H1 (cell line): ENCODE measurements at regions of chr14 and their contacts with region 1.

Region 1: GRCh38 chr14:100645192-100645990 is 58.2 kb upstream of the BEGAIN start:
- DNase-seq: peak; percentile 54 to 97
- H3K4me3 ChIP-seq: peak overlapping the region in 2 of 4 experiments; percentile 11 to 40; a peak in 4 of 8 replicates
- H3K27ac ChIP-seq: no peak overlapping the region
- H3K4me1 ChIP-seq: peaks cover 0 to 7% (median 6%) of the 10 kb centered on the region in 4 experiments; a peak in 5 of 7 replicates
- H3K27me3 ChIP-seq: no peaks in the 10 kb centered on the region; a peak in 1 of 7 replicates
- CTCF ChIP-seq: peak; percentile 80 to 93 (median 85)
- EP300 ChIP-seq: no peak; a peak in 1 of 3 replicates
- POLR2A ChIP-seq: no peak
- RAD21 ChIP-seq: peak; percentile 89 to 94

Region 2: GRCh38 chr14:99951085-99951484 is 694.3 kb before region 1 on chr14:
- CTCF ChIA-PET with region 1: no interaction called
- POLR2A ChIA-PET with region 1: no interaction called
- DNase-seq: no peak
- H3K4me3 ChIP-seq: no peak overlapping the region
- H3K27ac ChIP-seq: no peak overlapping the region
- H3K4me1 ChIP-seq: peaks cover 0 to 21% (median 4%) of the 10 kb centered on the region in 4 experiments; a peak in 5 of 7 replicates
- H3K27me3 ChIP-seq: peaks cover 0 to 3% (median 0%) of the 10 kb centered on the region in 4 experiments; a peak in 1 of 7 replicates
- CTCF ChIP-seq: no peak
- EP300 ChIP-seq: no peak
- POLR2A ChIP-seq: no peak
- RAD21 ChIP-seq: no peak

Region 3: GRCh38 chr14:100406505-100407131 is 238.8 kb before region 1 on chr14:
- CTCF ChIA-PET with region 1: interaction called, 20 read pairs
- POLR2A ChIA-PET with region 1: no interaction called
- DNase-seq: no peak
- H3K4me3 ChIP-seq: no peak overlapping the region
- H3K27ac ChIP-seq: no peak overlapping the region
- H3K4me1 ChIP-seq: peaks cover 7 to 19% (median 14%) of the 10 kb centered on the region in 4 experiments
- H3K27me3 ChIP-seq: no peaks in the 10 kb centered on the region
- CTCF ChIP-seq: no peak
- EP300 ChIP-seq: no peak
- POLR2A ChIP-seq: no peak
- RAD21 ChIP-seq: no peak

Region 4: DNA sequence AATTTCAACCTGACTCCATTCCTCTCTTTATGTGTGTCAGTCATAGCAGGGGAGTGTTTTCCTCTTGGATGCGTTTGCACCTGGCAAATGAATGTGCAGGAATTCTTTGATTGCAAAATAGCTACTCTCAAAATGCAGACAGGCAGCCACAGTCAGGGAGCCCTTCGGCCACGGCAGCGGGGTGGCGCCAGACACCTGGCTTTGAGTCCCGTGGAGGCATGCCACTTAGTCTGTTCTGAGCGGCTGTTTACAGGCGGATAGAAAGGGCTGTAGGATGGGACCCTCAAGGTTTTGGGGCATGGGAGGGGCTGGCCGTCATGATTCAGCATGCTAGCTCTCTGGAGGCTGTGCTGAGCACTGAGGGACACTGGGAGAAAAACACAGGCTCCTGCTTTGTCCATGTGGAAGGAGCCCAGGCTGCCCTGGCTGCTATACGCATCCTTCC is 205.2 kb before region 1 on chr14:
- CTCF ChIA-PET with region 1: interaction called, 73 read pairs
- POLR2A ChIA-PET with region 1: no interaction called
- DNase-seq: peak; percentile 31 to 75
- H3K4me3 ChIP-seq: no peak overlapping the region
- H3K27ac ChIP-seq: no peak overlapping the region
- H3K4me1 ChIP-seq: peaks cover 0 to 6% (median 4%) of the 10 kb centered on the region in 4 experiments; a peak in 4 of 7 replicates
- H3K27me3 ChIP-seq: no peaks in the 10 kb centered on the region
- CTCF ChIP-seq: peak; percentile 79 to 84 (median 79)
- EP300 ChIP-seq: no peak
- POLR2A ChIP-seq: no peak
- RAD21 ChIP-seq: peak; percentile 91 to 92

Region 5: GRCh38 chr14:100533656-100534485 is 111.5 kb before region 1 on chr14:
- CTCF ChIA-PET with region 1: interaction called, 61 read pairs
- POLR2A ChIA-PET with region 1: no interaction called
- DNase-seq: no peak
- H3K4me3 ChIP-seq: no peak overlapping the region
- H3K27ac ChIP-seq: no peak overlapping the region
- H3K4me1 ChIP-seq: peaks cover 0 to 10% (median 0%) of the 10 kb centered on the region in 4 experiments; a peak in 1 of 7 replicates
- H3K27me3 ChIP-seq: no peaks in the 10 kb centered on the region
- CTCF ChIP-seq: no peak
- EP300 ChIP-seq: no peak
- POLR2A ChIP-seq: no peak
- RAD21 ChIP-seq: no peak

Region 6: GRCh38 chr14:100568164-100568997 is 77.0 kb before region 1 on chr14:
- CTCF ChIA-PET with region 1: interaction called, 25 read pairs
- POLR2A ChIA-PET with region 1: no interaction called
- DNase-seq: peak in 1 of 2 experiments; percentile 68
- H3K4me3 ChIP-seq: peak overlapping the region; percentile 38 to 73 (median 47)
- H3K27ac ChIP-seq: no peak overlapping the region
- H3K4me1 ChIP-seq: peaks cover 0 to 28% (median 22%) of the 10 kb centered on the region in 4 experiments; a peak in 6 of 7 replicates
- H3K27me3 ChIP-seq: peaks cover 23 to 47% (median 41%) of the 10 kb centered on the region in 4 experiments
- CTCF ChIP-seq: no peak
- EP300 ChIP-seq: no peak
- POLR2A ChIP-seq: no peak
- RAD21 ChIP-seq: no peak

Region 7: DNA sequence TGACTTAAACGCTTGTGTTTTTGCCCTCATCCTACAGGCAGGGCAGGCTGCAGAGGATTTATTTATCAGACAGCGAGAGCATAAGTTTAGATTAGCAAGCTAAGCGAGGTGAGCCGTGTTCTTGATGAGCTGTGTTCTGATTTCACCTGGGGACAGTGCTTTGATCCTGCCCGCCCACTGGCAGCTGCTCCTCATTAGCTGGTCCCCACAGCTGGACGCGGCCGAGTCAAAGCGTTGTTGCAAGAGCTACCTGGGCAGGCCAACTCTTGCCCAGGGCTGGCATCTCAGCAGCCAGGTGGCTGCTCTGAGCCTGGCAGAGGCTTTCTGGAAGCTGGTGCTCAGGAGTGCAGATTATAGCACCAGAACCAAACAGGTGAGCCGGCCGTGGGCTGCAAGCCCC is 11.4 kb before region 1 on chr14:
- CTCF ChIA-PET with region 1: interaction called, 31 read pairs
- POLR2A ChIA-PET with region 1: no interaction called
- DNase-seq: no peak
- H3K4me3 ChIP-seq: no peak overlapping the region
- H3K27ac ChIP-seq: no peak overlapping the region
- H3K4me1 ChIP-seq: peaks cover 0 to 10% (median under 1%) of the 10 kb centered on the region in 4 experiments; a peak in 2 of 7 replicates
- H3K27me3 ChIP-seq: no peaks in the 10 kb centered on the region; a peak in 1 of 7 replicates
- CTCF ChIP-seq: no peak
- EP300 ChIP-seq: no peak
- POLR2A ChIP-seq: no peak
- RAD21 ChIP-seq: no peak

Region 8: DNA sequence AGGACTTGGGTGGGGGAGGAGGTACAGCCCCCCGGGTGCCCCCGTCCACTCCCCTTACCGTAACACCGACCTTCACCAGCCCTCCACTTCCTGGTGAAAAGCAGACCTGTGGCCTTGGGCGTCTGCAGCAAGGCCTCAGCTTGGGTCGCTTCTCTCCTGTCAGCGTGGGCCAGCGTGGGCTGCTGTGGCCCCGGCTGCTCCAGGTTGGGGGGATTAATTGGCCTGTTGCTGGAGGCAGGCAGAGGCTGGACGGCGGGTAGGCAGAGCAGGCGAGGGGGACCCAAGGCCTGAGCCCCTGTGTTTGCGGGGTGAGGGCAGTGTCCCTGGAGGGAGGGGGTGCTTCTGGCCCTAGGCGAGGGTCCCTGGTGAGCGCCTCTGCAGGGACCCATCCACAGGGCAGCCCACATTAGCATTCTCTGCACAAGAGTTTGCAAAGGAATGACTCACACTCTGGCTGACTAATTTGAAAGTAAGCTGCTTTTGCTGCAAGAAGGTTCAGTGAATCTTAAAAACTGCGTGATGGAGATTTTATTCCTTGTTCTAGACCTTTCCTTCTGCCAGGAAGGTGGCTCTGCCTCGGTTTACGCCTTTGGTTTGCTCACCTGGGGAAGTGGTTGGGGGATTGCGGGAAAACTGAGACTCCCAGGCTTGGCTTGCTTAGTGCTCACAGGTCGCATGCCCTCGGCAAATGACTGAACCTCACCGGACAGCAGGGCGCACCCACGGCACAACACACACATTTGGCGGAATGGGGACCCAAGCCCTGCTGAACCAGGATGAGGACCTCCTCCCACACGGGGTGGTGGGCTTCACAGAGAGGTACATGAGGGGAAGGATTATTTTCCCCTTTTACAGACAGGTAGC is 43.4 kb after region 1 on chr14:
- CTCF ChIA-PET with region 1: no interaction called
- POLR2A ChIA-PET with region 1: no interaction called
- DNase-seq: no peak
- H3K4me3 ChIP-seq: no peak overlapping the region
- H3K27ac ChIP-seq: no peak overlapping the region
- H3K4me1 ChIP-seq: peaks cover 0 to 14% (median 1%) of the 10 kb centered on the region in 4 experiments; a peak in 3 of 7 replicates
- H3K27me3 ChIP-seq: peaks cover 0 to 6% (median 0%) of the 10 kb centered on the region in 4 experiments; a peak in 1 of 7 replicates
- CTCF ChIP-seq: no peak
- EP300 ChIP-seq: no peak
- POLR2A ChIP-seq: no peak
- RAD21 ChIP-seq: no peak